ENCODE measurements at regions of chr11 and their contacts with region 1.

Region 1: DNA sequence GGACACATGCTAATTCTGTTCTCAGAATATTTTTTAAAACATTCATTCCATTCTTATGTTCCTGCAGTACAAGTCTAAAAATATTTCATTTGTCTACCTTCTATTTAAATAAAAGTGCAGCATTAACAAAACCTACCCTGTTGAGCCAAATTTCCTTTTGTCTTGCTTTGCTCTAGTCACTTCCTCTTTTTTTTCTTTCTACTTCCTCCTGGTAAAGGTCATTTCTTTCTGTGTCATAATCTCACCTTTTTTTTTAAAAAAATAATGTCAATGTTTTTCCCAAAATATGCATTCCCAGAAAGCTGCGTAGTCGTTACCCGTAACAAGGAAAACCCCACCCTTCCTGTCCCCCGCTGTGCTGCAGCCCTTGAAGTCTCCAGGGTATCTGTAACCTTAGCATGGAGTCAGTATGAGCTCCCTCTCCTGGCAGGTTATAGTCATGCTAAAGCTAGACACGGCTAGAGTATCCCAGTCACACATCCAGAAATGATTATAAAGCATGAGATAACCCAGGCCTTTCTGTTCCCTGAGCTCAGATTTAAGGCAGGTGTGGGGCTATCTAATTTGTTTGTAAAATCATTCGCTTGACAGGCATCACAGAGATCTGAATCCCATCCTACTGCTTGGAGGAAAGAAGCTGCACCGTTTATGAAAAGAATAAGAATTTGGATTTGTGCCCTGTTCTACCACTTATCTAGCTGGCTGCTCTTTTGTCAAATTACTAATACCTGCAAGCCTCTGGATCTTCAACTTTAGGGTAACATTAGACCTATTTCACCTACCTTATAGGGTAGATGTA is 51.1 kb upstream of the EED start:
- DNase-seq: peak; percentile 55 to 65
- ATAC-seq: peak; percentile 96

Region 2: DNA sequence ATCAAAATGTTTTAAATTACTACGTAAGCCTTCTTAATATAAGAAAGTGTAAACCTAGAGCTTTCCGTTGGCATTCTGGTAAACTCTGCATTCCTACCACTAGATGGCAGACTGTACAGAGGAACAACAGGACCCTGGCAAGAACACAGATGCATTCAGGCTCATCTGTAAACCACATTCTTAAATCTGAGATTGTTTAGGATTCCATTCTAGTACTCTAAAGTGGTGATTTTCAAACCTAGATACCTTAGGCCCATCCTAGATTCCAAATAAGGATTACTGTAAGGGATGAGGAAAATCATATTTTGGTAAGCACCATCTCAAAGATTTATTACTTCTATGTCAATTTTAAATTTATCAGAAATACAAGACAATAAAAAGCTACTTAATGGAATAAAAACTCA is 151.5 kb before region 1 on chr11:
- intact Hi-C with region 1: loop called in 1 of 2 experiments (anchors 5 kb)
- DNase-seq: peak; percentile 27 to 36
- ATAC-seq: peak; percentile 89